ENCODE measurements at regions of chr15 and their contacts with region 1.

Region 1: GRCh38 chr15:50003786-50004334 is 115.2 kb downstream of the ATP8B4 start:
- DNase-seq: peak; percentile 52
- H3K4me3 ChIP-seq: no peak overlapping the region
- H3K27ac ChIP-seq: peak overlapping the region; percentile 2 to 19
- H3K4me1 ChIP-seq: no peaks in the 10 kb centered on the region
- H3K27me3 ChIP-seq: no peaks in the 10 kb centered on the region
- CTCF ChIP-seq: peak in 3 of 4 experiments; percentile 46 to 56 (median 55)
- POLR2A ChIP-seq: no peak

Region 2: DNA sequence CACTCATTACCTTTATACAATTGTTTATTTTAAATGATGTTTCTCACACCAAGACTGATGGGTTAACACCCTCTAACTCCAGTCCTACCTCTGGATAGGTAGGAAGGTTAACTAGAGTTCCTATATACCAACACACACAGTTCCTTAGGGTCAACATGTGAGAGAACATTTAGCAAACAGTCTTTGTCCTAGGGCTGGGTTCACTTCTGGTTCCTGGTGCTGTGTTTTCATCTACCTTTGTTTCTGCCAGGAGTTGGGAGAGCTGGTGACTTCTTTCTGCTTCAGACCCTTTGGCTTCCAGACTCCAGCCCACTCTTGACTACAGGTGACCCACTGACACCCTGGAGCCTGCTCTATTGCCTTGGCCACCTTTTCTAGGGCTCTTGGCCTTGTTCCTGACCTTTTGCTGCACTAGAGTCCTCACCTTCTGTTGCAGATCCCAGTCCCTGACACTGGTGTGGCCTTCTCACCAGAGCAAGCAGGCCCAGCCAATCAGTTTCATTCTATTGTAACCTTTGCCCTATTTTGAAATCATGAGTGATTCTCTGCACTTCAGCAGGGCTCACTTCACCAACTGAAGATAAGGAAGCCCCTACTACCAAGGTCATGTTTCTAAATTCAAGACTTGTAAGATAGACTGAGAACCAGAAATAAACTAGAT is 907.6 kb before region 1 on chr15:
- intact Hi-C with region 1: no loop called
- DNase-seq: no peak
- H3K4me3 ChIP-seq: no peak overlapping the region
- H3K27ac ChIP-seq: no peak overlapping the region
- H3K4me1 ChIP-seq: no peaks in the 10 kb centered on the region
- H3K27me3 ChIP-seq: no peaks in the 10 kb centered on the region
- CTCF ChIP-seq: no peak
- POLR2A ChIP-seq: no peak

Region 3: DNA sequence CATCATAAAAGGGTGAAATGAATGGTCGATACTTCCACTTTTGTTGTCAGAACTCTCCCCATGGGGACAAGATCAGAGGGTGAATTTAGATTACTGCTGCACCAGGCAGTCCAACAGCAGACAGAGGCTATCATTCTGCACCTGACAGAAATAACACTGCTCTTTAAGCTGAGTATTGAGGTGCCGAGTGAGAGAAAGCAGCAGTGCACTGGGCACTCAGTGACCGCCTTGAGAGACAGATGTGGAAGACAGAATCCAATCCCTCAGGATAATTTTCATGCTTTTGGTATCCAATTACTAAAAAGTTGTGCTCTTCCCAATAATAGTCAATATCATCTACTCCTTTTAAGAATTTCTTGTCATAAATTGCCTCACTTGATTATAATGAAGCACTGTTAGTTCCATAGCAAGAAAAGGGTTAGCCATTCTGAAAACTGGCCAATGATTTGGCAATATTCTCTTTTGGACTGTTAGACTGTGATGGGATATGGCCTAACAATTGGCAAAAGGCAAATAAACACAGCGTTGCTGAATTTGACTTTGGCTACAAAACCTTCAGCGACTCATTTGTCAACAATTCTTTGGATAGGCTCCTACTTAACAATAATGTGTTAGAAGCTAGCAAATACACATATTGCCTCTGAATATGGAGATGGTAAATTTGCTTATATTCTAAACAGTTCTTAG is 575.3 kb before region 1 on chr15:
- intact Hi-C with region 1: loop called (anchors 5 kb)
- DNase-seq: no peak
- H3K4me3 ChIP-seq: no peak overlapping the region
- H3K27ac ChIP-seq: no peak overlapping the region
- H3K4me1 ChIP-seq: no peaks in the 10 kb centered on the region
- H3K27me3 ChIP-seq: no peaks in the 10 kb centered on the region
- CTCF ChIP-seq: no peak
- POLR2A ChIP-seq: no peak

Region 4: GRCh38 chr15:49675041-49675440 is 328.8 kb before region 1 on chr15:
- intact Hi-C with region 1: loop called (anchors 10 kb)
- DNase-seq: no peak
- H3K4me3 ChIP-seq: no peak overlapping the region
- H3K27ac ChIP-seq: no peak overlapping the region
- H3K4me1 ChIP-seq: no peaks in the 10 kb centered on the region
- H3K27me3 ChIP-seq: no peaks in the 10 kb centered on the region
- CTCF ChIP-seq: no peak
- POLR2A ChIP-seq: no peak

Region 5: DNA sequence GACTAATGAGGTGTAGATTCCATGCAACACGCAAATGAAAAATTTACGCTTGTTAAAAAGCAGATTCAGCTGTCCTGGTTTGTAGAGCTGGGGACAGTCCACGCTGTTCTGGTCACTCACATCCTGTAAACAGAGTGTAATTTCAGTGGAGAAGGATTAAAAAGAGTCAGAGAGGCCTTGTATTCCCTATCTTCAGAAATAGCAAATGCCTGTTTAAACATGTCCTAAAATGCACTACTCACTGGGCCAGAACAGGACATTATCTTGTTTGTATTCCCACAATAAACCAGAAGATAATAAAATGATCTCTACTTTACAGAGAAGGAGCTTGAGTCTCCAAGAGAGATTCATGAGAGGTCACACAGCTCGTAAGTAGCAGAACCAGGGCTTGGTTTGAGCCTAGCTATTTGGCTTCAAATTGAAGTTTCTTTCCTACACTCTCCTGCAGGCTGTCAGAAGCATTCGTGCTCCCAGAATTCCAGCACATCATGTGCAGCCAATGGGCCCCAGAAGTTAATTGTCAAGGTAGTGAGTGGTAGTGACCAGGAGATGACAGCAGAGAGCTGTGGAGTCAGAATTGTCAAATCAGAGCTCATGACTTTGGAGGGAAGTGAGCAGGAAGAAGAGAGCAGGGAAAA is 127.3 kb before region 1 on chr15:
- intact Hi-C with region 1: loop called (anchors 10 kb)
- DNase-seq: peak; percentile 6
- H3K4me3 ChIP-seq: peak overlapping the region in 1 of 2 donors; percentile 0
- H3K27ac ChIP-seq: peak overlapping the region; percentile 65 to 69
- H3K4me1 ChIP-seq: peaks cover 7% of the 10 kb centered on the region
- H3K27me3 ChIP-seq: no peaks in the 10 kb centered on the region
- CTCF ChIP-seq: peak in 2 of 4 experiments; percentile 16 to 42
- POLR2A ChIP-seq: no peak

Region 6: DNA sequence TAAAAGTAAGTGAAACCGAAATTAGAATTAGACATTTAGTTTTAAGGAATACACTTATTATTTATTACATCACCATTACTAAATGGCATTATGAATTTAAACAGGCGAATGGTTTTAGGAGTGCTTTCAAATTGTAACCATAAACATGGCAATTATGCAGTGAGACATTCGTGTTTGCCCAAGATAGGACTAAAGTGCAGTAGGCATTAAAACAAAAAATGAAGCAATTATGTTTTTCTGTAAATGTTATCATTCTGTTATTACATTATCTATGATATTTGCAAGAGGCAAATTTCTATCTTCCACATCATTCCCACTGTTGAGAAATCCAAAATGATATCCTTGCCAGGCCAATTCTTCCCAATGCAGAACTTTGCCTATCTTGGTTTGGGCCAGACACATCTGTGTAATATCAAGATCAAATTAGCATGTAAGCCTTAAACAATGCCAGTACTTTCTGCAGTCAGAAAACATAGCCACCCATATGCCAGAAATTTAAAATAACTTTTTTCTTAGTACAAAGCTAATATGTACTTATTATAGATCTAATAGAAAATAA is 41.7 kb before region 1 on chr15:
- intact Hi-C with region 1: no loop called
- DNase-seq: no peak
- H3K4me3 ChIP-seq: no peak overlapping the region
- H3K27ac ChIP-seq: no peak overlapping the region
- H3K4me1 ChIP-seq: no peaks in the 10 kb centered on the region
- H3K27me3 ChIP-seq: no peaks in the 10 kb centered on the region
- CTCF ChIP-seq: no peak
- POLR2A ChIP-seq: no peak

Region 7: GRCh38 chr15:50519740-50520425 is 516.0 kb after region 1 on chr15:
- intact Hi-C with region 1: no loop called
- DNase-seq: no peak
- H3K4me3 ChIP-seq: no peak overlapping the region
- H3K27ac ChIP-seq: no peak overlapping the region
- H3K4me1 ChIP-seq: peaks cover 2% of the 10 kb centered on the region
- H3K27me3 ChIP-seq: no peaks in the 10 kb centered on the region
- CTCF ChIP-seq: no peak
- POLR2A ChIP-seq: no peak

Measured in prostate gland (tissue), 2 donors.